ENCODE measurements at regions of chr10 and their contacts with region 1.

Region 1: GRCh38 chr10:110210674-110211464 is 3.5 kb downstream of the MXI1 start:
- DNase-seq: peak; percentile 99

Region 2: GRCh38 chr10:109996225-109996624 is 214.6 kb before region 1 on chr10:
- intact Hi-C with region 1: no loop called
- DNase-seq: no peak

Region 3: GRCh38 chr10:110138197-110138812 is 72.6 kb before region 1 on chr10:
- intact Hi-C with region 1: loop called (anchors 5 kb)
- DNase-seq: no peak

Region 4: GRCh38 chr10:110176141-110177030 is 34.5 kb before region 1 on chr10:
- intact Hi-C with region 1: loop called (anchors 2 kb)
- DNase-seq: peak; percentile 82

Region 5: GRCh38 chr10:110225756-110226542 is 15.1 kb after region 1 on chr10:
- intact Hi-C with region 1: loop called (anchors 1 kb)
- DNase-seq: peak; percentile 96

Region 6: DNA sequence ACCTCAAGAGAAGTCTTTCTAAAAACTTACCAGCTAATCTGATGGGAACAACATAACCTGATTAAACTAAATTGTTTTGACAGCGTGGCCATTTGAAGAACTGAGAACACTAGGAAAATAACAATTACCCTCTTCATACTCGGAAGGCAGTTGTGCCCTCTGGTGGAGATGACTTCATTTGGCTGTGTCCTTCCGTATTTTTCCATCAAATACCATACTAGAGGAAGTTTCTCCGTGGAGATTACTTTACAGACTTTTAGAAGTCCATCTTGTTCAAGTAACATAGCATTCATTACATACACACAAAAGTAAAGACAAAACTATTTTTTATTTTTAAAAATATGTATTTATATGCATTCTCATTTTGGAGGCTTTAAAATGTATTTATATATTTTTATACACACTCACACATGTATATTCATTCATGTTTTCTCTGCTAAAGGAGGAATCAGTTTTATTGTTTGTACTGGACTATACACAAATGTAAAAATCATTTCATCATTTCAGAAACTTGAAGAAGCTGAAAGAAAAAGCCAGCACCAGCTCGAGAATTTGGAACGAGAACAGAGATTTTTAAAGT is 68.6 kb after region 1 on chr10:
- intact Hi-C with region 1: loop called (anchors 2 kb)
- DNase-seq: no peak

Region 7: DNA sequence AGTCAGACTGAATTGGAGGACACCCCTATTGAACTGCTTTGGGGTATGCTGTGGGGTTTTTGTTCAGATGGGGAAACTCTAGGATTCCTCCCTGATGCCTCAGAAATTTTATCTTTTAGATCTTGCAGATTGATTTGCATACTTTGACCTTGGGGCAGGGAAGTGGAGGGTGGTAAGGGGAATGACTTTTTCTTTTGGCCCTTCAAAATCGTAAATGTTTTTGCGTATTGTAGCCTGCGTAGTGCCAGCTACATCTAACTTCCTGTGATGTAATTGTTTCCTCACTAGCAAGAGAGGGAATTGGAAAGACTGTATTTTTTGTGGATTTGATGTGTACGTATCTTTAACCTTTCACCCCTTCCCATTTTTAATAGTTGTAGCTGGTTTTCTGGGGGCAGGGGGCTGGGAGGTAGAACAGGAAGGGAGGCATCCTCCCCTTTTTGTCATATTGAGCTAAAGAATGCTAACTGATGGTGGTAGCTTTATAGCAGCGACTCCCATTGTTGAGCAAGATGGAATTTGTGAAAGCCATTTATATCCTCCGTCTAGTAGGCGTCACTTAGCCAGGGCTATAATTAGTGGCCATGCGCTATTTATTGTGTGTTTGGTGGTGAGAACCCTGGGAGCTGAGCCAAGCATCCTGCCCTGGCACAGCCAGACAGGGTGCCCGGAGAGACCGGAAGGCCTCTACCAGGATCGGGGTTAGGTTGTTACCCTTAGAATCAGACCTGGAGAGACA is 298.1 kb after region 1 on chr10:
- intact Hi-C with region 1: loop called (anchors 5 kb)
- DNase-seq: no peak

Measured in cardiac septum (tissue), 1 donor.